ENCODE measurements at regions of chr4 and their contacts with region 1.

Region 1: GRCh38 chr4:153466081-153466948 is at the start of gene TMEM131L:
- H3K4me3 ChIP-seq: peak within 1 kb of the TSS; percentile 78
- H3K27ac ChIP-seq: peak within 1 kb of the TSS; percentile 70; the same call in 1 of the 2 replicates
- H3K4me1 ChIP-seq: 0 out of 2 replicates have a peak, but pooled peaks cover 3% of the 10 kb centered on the region
- CTCF ChIP-seq: peak; percentile 66

Region 2: GRCh38 chr4:153486281-153487151 is 20.2 kb after region 1 on chr4:
- CTCF ChIA-PET with region 1: interaction called, 6 read pairs
- POLR2A ChIA-PET with region 1: interaction called, 10 read pairs
- H3K4me3 ChIP-seq: no peak overlapping the region
- H3K27ac ChIP-seq: peak overlapping the region; percentile 42; the same call in 1 of the 2 replicates
- H3K4me1 ChIP-seq: peaks cover 28% of the 10 kb centered on the region
- CTCF ChIP-seq: no peak

Region 3: DNA sequence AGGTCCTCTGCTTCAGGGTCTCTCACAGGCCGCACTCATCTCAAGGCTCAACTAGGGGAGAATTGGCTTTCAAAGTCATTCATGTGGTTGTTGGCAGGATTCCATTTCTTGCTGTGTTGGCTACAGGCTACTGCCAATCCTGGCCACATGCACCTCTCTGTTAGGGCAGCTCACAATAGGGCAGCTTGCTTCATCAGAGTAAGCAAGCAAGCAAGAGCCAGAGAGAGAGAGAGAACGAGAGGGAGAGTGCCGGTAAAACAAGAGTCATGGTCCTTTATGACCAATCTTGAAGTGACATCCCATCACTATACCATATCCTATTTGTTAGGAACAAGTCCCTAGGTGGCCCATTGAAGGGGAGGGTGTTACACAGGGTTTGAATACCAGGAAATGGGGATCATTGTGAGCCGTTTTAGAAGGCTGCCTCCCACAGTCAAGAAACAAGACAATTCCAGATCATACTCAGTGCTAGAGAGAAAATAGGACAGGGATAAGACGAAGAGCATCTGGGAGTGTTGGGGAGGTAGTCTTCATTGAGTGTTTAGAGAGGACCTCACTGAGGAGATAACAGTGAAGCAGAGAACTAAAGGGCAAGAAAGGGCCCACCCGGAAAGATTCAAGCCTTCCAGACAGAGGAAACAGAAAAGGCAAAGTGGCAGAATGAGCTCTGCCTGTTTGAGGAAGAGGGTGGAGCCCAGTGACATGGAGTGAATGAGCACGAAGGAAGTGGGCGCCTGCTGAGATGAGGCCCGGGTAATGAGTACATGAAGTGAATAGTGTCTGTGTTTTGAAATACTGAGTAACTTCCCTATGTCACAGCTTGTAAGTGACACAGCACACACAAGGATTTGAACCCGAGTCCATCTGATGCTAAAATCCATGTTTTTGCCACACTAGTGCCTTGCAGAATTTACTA is 185.0 kb after region 1 on chr4:
- CTCF ChIA-PET with region 1: no interaction called
- POLR2A ChIA-PET with region 1: no interaction called
- H3K4me3 ChIP-seq: no peak overlapping the region
- H3K27ac ChIP-seq: no peak overlapping the region
- H3K4me1 ChIP-seq: no peaks in the 10 kb centered on the region
- CTCF ChIP-seq: no peak

Measured in HEK293 (cell line).